Ascending aorta (tissue), 2 donors: ENCODE measurements at regions of chr3 and their contacts with region 1.

Region 1: GRCh38 chr3:169662132-169662842 is 1.2 kb downstream of the MECOM start:
- DNase-seq: peak in 1 of 2 donors; percentile 88
- H3K4me3 ChIP-seq: peak overlapping the region; percentile 69 to 76
- H3K27ac ChIP-seq: peak overlapping the region; percentile 96 to 97
- H3K4me1 ChIP-seq: peaks cover 0 to 2% of the 10 kb centered on the region in 2 donors
- H3K27me3 ChIP-seq: no peaks in the 10 kb centered on the region
- CTCF ChIP-seq: peak; percentile 53 to 80 (median 68)

Region 2: GRCh38 chr3:168865022-168865551 is 797.2 kb before region 1 on chr3:
- intact Hi-C with region 1: no loop called
- DNase-seq: no peak
- H3K4me3 ChIP-seq: peak overlapping the region; percentile 21 to 23
- H3K27ac ChIP-seq: no peak overlapping the region
- H3K4me1 ChIP-seq: no peaks in the 10 kb centered on the region
- H3K27me3 ChIP-seq: no peaks in the 10 kb centered on the region
- CTCF ChIP-seq: peak in 2 of 3 experiments; percentile 60 to 69

Region 3: DNA sequence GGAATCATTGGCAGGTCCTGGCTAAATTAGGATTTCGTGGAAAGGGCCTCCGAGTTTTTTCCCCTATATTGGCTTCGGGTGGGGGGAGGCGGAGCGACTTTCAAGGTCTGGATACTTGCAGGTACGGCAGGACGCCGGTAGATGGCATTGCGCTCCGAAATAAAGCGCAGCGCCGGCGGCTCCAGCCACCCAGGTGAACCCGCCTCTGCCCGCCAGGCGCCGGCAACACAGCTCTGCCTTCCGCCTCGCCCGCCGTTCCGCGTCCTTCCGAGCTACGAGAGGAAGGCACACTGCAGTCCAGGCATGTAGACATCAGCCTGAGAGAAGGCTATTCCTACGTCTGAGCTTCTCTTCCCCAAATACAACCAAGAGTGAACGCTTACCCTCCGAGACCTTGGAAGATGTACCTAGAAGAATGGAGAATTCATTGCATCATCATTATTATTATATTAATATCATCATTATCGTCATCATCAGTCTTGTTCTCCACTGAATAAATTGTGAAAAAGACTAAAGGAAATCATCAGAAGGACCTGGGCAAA is 512.9 kb before region 1 on chr3:
- intact Hi-C with region 1: loop called (anchors 1 kb)
- DNase-seq: peak; percentile 23 to 92
- H3K4me3 ChIP-seq: peak overlapping the region; percentile 46 to 65
- H3K27ac ChIP-seq: peak overlapping the region; percentile 72 to 90
- H3K4me1 ChIP-seq: peaks cover 0 to 7% of the 10 kb centered on the region in 2 donors
- H3K27me3 ChIP-seq: no peaks in the 10 kb centered on the region
- CTCF ChIP-seq: peak; percentile 87 to 93 (median 88)

Region 4: GRCh38 chr3:169227911-169228310 is 434.4 kb before region 1 on chr3:
- intact Hi-C with region 1: loop called (anchors 5 kb)
- DNase-seq: no peak
- H3K4me3 ChIP-seq: peak overlapping the region in 1 of 2 donors; percentile 30
- H3K27ac ChIP-seq: peak overlapping the region; percentile 42 to 60
- H3K4me1 ChIP-seq: peaks cover 3 to 29% of the 10 kb centered on the region in 2 donors
- H3K27me3 ChIP-seq: no peaks in the 10 kb centered on the region
- CTCF ChIP-seq: no peak

Region 5: GRCh38 chr3:169475978-169476698 is 186.1 kb before region 1 on chr3:
- intact Hi-C with region 1: loop called (anchors 2 kb)
- DNase-seq: no peak
- H3K4me3 ChIP-seq: no peak overlapping the region
- H3K27ac ChIP-seq: no peak overlapping the region
- H3K4me1 ChIP-seq: peaks cover 0 to 14% of the 10 kb centered on the region in 2 donors
- H3K27me3 ChIP-seq: no peaks in the 10 kb centered on the region
- CTCF ChIP-seq: no peak

Region 6: DNA sequence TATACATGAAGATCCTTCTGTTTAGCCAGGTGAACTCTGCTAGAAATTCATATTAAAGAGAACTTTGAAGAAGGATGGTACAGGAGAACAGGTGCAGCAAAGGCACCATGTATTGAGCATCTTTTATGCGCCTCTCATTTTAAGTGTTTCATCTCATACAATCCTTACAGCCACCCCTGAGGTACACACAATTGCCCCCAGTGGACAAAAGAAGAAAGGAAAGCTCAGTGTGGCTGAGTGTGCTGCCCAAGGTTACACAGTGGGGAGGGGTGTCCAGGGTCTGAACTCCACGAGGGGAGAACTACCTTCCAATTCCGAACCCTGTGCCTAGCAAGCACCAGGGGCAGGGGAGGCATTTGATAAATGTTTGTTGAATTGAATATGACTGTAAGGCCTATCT is 97.4 kb before region 1 on chr3:
- intact Hi-C with region 1: no loop called
- DNase-seq: no peak
- H3K4me3 ChIP-seq: no peak overlapping the region
- H3K27ac ChIP-seq: no peak overlapping the region
- H3K4me1 ChIP-seq: peaks cover 0 to 2% of the 10 kb centered on the region in 2 donors
- H3K27me3 ChIP-seq: no peaks in the 10 kb centered on the region
- CTCF ChIP-seq: no peak

Region 7: GRCh38 chr3:169575373-169575772 is 86.9 kb before region 1 on chr3:
- intact Hi-C with region 1: loop called (anchors 5 kb)
- DNase-seq: no peak
- H3K4me3 ChIP-seq: peak overlapping the region in 1 of 2 donors; percentile 4
- H3K27ac ChIP-seq: peak overlapping the region; percentile 47 to 52
- H3K4me1 ChIP-seq: peaks cover 0 to 18% of the 10 kb centered on the region in 2 donors
- H3K27me3 ChIP-seq: no peaks in the 10 kb centered on the region
- CTCF ChIP-seq: no peak

Region 8: GRCh38 chr3:169650503-169650902 is 11.8 kb before region 1 on chr3:
- intact Hi-C with region 1: no loop called
- DNase-seq: no peak
- H3K4me3 ChIP-seq: no peak overlapping the region
- H3K27ac ChIP-seq: peak overlapping the region; percentile 27 to 41
- H3K4me1 ChIP-seq: peaks cover 0 to 13% of the 10 kb centered on the region in 2 donors
- H3K27me3 ChIP-seq: no peaks in the 10 kb centered on the region
- CTCF ChIP-seq: no peak

Region 9: DNA sequence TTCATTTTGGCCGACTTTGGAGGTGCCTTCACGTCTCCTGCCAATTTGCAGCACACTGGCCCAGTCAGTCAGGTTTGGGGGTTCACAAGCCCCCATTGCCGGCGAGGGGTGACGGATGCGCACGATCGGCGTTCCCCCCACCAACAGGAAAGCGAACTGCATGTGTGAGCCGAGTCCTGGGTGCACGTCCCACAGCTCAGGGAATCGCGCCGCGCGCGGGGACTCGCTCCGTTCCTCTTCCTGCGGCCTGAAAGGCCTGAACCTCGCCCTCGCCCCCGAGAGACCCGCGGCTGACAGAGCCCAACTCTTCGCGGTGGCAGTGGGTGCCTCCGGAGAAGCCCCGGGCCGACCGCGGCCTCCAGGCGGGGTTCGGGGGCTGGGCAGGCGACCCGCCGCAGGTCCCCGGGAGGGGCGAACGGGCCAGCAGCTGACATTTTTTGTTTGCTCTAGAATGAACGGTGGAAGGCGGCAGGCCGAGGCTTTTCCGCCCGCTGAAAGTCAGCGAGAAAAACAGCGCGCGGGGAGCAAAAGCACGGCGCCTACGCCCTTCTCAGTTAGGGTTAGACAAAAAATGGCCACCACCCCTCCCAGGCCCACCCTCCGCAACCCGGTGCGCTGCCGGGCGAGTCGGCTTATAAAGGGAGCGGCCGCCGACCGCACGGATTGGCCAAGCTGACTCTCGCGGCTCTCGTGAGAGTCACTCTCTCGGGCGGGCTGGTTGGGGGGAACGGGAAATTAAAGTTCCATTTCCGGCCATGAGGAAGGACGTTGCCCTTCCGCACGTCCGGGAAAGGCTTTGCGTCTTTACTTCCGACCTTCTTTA is 102.4 kb after region 1 on chr3 and contains the start of gene TERC:
- intact Hi-C with region 1: loop called (anchors 2 kb)
- DNase-seq: peak; percentile 77 to 98
- H3K4me3 ChIP-seq: peak within 1 kb of the TSS; percentile 75 to 83
- H3K27ac ChIP-seq: peak within 1 kb of the TSS; percentile 96 to 97
- H3K4me1 ChIP-seq: peaks cover 3 to 8% of the 10 kb centered on the region in 2 donors
- H3K27me3 ChIP-seq: no peaks in the 10 kb centered on the region
- CTCF ChIP-seq: no peak
- total RNA-seq, gene TERC: 260 TPM

Region 10: GRCh38 chr3:169811631-169812331 is 149.5 kb after region 1 on chr3:
- intact Hi-C with region 1: no loop called
- DNase-seq: no peak
- H3K4me3 ChIP-seq: peak overlapping the region; percentile 58 to 73
- H3K27ac ChIP-seq: peak overlapping the region; percentile 47 to 81
- H3K4me1 ChIP-seq: peaks cover 0 to 6% of the 10 kb centered on the region in 2 donors
- H3K27me3 ChIP-seq: no peaks in the 10 kb centered on the region
- CTCF ChIP-seq: no peak